Aorta (tissue), 5 donors: ENCODE measurements at regions of chr15 and their contacts with region 1.

Region 1: DNA sequence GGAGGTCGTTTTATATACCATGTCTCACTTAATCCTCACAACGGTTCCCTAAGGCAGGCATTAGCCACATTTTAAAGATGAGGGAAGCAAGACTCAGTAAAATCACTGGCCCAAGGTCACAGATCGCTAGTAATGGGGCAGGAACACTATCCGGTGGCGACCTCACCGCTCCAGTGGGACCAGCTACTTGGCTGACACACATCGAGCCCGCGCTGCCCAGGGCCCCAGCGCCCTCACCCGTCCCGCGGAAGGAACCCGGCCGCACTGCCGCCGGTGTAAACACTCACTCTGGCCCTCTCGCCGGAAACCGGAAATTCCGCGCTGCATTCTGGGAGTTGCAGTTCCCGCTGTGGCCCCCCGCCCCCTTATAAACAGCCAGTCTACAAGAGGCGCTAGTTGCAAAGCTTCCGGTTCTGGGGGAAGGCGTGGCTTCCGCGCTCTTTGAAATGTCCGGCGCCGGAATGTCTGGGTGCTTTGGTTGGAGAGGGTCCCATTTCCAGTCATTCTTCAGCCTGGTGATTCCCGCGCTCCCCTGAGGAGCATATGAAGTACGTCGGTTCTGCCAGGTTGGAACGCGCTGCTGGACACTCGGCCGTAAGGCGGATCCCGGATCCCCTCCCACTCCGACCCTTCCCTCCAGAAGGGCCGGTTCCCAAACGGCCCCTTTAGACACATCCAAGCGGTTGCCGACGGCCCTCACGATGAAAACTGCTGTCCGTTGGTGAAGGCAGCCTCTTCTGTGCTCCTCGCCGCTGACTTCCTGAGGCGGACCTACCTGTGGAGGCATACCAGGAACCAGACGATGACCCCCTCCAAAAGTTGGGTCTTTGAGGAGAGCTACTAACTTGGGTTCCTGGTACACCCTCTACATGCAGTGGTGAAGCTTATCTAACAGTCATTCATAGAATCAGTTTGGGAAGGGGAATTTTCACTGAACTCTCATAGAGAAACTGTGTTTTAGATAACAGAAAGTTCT is at the start of gene UBL7:
- DNase-seq: peak; percentile 99
- ATAC-seq: peak; percentile 99
- H3K4me3 ChIP-seq: peak within 1 kb of the TSS; percentile 65 to 78
- H3K27ac ChIP-seq: peak within 1 kb of the TSS in 1 of 2 donors; percentile 45
- H3K4me1 ChIP-seq: no peaks in the 10 kb centered on the region
- H3K27me3 ChIP-seq: no peaks in the 10 kb centered on the region
- total RNA-seq, gene UBL7: 25.1 to 27.0 TPM

Region 2: DNA sequence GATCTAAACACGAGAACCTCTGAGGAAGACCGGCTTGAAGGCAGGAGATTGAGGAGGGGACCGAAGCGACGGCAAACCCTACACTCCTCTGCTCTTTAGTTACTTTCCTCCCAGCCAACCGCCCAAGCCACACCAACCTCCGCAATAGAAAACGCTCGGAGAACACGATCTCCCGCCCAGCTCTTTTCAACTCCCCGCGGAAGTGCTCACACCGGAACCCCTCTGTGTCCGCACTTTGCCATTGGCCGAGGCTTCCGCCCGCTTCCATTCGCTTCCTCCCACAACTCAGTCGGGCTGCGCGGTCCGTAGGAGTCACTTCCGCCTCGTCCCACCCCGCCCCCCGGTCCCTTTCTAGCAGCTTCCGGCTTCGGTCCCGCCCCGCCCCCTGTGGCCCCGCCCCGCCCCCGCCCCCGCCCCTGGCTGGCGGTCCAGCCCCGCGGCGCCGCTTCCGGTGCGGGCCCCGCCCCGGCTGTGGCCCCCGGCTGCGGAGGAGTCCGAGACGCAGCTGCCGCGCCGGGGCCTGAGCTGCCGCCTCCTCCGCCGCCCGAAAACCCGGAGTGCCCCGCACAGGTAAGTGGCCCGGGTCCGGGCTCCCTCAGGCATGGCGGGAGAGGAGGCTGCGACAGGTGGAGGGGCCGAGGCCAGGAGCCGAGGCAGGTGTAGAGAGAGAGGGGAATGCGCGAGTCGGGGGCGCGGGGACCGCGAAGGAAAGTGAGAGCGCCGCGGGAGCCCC is 79.8 kb after region 1 on chr15 and contains the start of gene ARID3B:
- intact Hi-C with region 1: no loop called
- DNase-seq: peak; percentile 98 to 99
- ATAC-seq: peak; percentile 97
- H3K4me3 ChIP-seq: peak within 1 kb of the TSS; percentile 88 to 90
- H3K27ac ChIP-seq: peak within 1 kb of the TSS in 1 of 2 donors; percentile 19
- H3K4me1 ChIP-seq: no peaks in the 10 kb centered on the region
- H3K27me3 ChIP-seq: no peaks in the 10 kb centered on the region
- total RNA-seq, gene ARID3B: 10.9 to 11.7 TPM

Region 3: GRCh38 chr15:74635228-74635627 is 174.1 kb after region 1 on chr15:
- intact Hi-C with region 1: loop called in 1 of 2 experiments (anchors 5 kb)
- DNase-seq: peak in 1 of 2 donors; percentile 88
- ATAC-seq: peak; percentile 75
- H3K4me3 ChIP-seq: no peak overlapping the region
- H3K27ac ChIP-seq: no peak overlapping the region
- H3K4me1 ChIP-seq: no peaks in the 10 kb centered on the region
- H3K27me3 ChIP-seq: no peaks in the 10 kb centered on the region